ENCODE measurements at regions of chr14 and their contacts with region 1.

Region 1: GRCh38 chr14:39426605-39427004 is 5.6 kb downstream of the FBXO33 start:
- DNase-seq: peak in 2 of 5 donors; percentile 11 to 13
- H3K4me3 ChIP-seq: no peak overlapping the region
- H3K4me3 Mint-ChIP-seq: peak overlapping the region in 6 of 8 donors; percentile 20 to 63 (median 42)
- H3K27ac ChIP-seq: no peak overlapping the region
- H3K27ac Mint-ChIP-seq: peak overlapping the region in 3 of 7 donors; percentile 20 to 63 (median 33)
- H3K4me1 ChIP-seq: peaks cover 88% of the 10 kb centered on the region
- H3K4me1 Mint-ChIP-seq: peaks cover 60 to 92% (median 72%) of the 10 kb centered on the region in 4 donors
- H3K27me3 ChIP-seq: no peaks in the 10 kb centered on the region
- H3K27me3 Mint-ChIP-seq: no peaks in the 10 kb centered on the region

Region 2: DNA sequence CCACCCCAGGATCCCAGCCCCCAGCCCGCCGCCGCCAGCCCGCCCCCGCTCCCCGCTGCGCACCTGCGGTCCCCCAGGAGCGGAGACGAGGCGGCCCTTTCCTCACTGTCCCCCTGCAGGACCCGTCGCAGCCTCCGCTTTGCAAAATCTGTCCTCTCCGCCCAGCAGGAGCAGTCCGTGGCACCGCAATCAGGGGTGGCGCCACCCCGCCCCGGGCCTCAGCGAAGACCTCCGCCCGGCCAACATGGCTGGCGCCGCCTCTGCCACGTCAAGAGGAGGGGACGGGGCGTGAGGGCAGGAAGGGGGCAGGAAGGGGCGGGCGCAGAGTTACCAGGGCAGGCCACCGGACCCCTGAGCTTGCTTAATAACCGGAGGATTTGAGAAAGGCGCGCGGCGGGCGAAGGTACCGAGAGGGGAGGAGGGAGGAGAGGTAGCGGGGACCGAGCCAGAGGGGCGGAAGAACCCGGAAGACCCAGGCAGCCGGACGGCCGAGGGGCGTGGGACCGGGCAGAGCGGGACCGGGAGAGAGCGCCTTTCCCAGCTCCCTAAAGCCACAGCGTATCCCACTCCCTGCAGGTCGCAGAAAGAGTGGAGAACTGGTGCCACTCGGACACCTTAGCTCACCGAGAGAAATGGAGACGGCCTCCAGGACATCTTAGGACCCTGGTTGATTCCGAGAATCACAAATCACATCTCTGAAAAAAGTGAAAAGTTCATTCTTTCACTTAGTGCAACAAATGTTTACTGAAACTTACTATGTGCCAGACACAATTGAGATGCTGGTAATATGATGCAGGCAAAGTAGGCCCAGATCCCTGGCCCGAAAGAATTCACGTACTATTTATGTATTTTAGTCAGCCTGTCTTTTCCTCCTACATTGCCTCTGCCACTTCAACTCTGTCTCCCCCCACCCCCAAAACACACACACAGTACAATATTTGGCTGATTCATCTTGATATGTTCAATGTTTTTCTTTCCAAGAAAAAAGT is 323.3 kb before region 1 on chr14 and contains the start of gene SEC23A:
- CTCF ChIA-PET with region 1: interaction called, 10 read pairs
- POLR2A ChIA-PET with region 1: interaction called, 38 read pairs
- intact Hi-C with region 1: loop called (anchors 1 kb)
- DNase-seq: peak; percentile 80 to 88 (median 82)
- H3K4me3 ChIP-seq: peak within 1 kb of the TSS; percentile 77 to 89
- H3K4me3 Mint-ChIP-seq: peak within 1 kb of the TSS; percentile 93 to 98 (median 96)
- H3K27ac ChIP-seq: peak within 1 kb of the TSS; percentile 86
- H3K27ac Mint-ChIP-seq: peak within 1 kb of the TSS; percentile 91 to 99 (median 98)
- H3K4me1 ChIP-seq: peaks cover 50% of the 10 kb centered on the region
- H3K4me1 Mint-ChIP-seq: peaks cover 21 to 64% (median 40%) of the 10 kb centered on the region in 4 donors
- H3K27me3 ChIP-seq: no peaks in the 10 kb centered on the region
- H3K27me3 Mint-ChIP-seq: no peaks in the 10 kb centered on the region
- total RNA-seq, gene SEC23A: 61.1 to 70.3 TPM

Region 3: GRCh38 chr14:39393274-39393673 is 33.3 kb before region 1 on chr14:
- CTCF ChIA-PET with region 1: interaction called, 3 read pairs
- POLR2A ChIA-PET with region 1: interaction called, 7 read pairs
- intact Hi-C with region 1: loop called (anchors 5 kb)
- DNase-seq: no peak
- H3K4me3 ChIP-seq: no peak overlapping the region
- H3K4me3 Mint-ChIP-seq: no peak overlapping the region
- H3K27ac ChIP-seq: no peak overlapping the region
- H3K27ac Mint-ChIP-seq: peak overlapping the region in 1 of 7 donors; percentile 55
- H3K4me1 ChIP-seq: no peaks in the 10 kb centered on the region
- H3K4me1 Mint-ChIP-seq: peaks cover 0 to 4% (median 0%) of the 10 kb centered on the region in 4 donors
- H3K27me3 ChIP-seq: no peaks in the 10 kb centered on the region
- H3K27me3 Mint-ChIP-seq: no peaks in the 10 kb centered on the region